Pancreas (tissue), 10 donors: ENCODE measurements at regions of chr11 and their contacts with region 1.

Region 1: DNA sequence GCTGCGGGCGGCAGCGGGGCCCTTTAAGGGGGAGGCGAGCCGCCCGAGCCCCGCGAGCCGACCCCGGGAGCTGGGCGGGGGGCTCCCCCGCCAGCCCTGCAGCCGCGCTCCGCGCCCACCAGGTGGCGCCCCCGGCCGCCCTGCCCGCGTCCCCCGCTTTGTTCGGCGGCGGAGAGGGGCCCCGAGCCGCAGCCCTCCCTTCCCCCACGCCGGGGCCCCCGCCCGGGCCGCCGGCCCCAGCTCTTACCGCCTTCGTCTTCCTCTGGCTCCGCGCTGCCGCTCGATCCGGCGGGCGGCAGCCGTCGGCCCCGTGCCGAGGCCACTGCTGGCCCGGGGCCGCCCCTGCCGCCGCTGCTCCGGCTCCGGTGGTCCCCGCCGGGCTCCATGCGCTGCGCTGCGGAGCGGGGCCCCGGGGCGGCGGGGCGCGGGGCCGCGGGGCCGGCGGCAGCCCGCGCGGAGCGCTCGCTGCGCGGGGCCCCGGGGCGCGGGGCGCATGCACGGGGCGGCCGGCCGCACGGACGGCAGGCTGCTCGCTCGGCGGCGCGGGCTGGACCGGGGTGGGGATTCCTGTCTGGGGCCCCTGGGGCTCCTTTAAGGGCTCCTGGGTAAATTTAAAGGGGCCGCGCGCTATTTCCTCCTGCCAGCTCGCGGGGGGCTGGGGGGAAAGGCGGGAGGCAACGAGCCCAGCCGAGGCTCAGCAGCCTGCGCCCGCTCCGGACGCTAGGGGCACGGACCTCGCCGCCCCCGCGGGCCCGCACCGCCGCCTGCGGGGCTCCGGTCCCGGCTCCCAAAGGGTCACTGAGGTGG is at the start of gene ZFTA:
- DNase-seq: peak; percentile 63 to 86 (median 74)
- ATAC-seq: peak; percentile 32 to 54 (median 38)
- H3K4me3 ChIP-seq: peak within 1 kb of the TSS; percentile 63 to 94 (median 86)
- H3K27ac ChIP-seq: peak within 1 kb of the TSS; percentile 35 to 69 (median 58)
- H3K4me1 ChIP-seq: peaks cover 0 to 3% (median 0%) of the 10 kb centered on the region in 3 donors
- H3K27me3 ChIP-seq: no peaks in the 10 kb centered on the region
- CTCF ChIP-seq: peak; percentile 14 to 62 (median 32)
- total RNA-seq, gene ZFTA: 4.3 to 11.3 (median 6.2) TPM

Region 2: GRCh38 chr11:63945477-63946163 is 177.2 kb after region 1 on chr11:
- intact Hi-C with region 1: loop called in 2 of 3 experiments (anchors 5 to 10 kb)
- DNase-seq: peak; percentile 70 to 89 (median 78)
- ATAC-seq: peak; percentile 96 to 99 (median 98)
- H3K4me3 ChIP-seq: peak overlapping the region in 1 of 4 donors; percentile 7
- H3K27ac ChIP-seq: peak overlapping the region in 2 of 4 donors; percentile 5 to 9
- H3K4me1 ChIP-seq: peaks cover 0 to 8% (median 0%) of the 10 kb centered on the region in 3 donors
- H3K27me3 ChIP-seq: no peaks in the 10 kb centered on the region
- CTCF ChIP-seq: peak; percentile 47 to 81 (median 73)